H1 (cell line): ENCODE measurements at regions of chr13 and their contacts with region 1.

Region 1: GRCh38 chr13:33017323-33017929 is 1.2 kb downstream of the KL start:
- DNase-seq: no peak
- H3K4me3 ChIP-seq: peak overlapping the region; percentile 32 to 62 (median 37); a peak in 5 of 8 replicates
- H3K27ac ChIP-seq: no peak overlapping the region
- H3K4me1 ChIP-seq: peaks cover 0 to 6% (median under 1%) of the 10 kb centered on the region in 4 experiments; a peak in 4 of 7 replicates
- H3K27me3 ChIP-seq: peaks cover 29 to 43% (median 34%) of the 10 kb centered on the region in 4 experiments
- CTCF ChIP-seq: peak; percentile 37 to 64 (median 49)
- EP300 ChIP-seq: no peak
- POLR2A ChIP-seq: no peak
- RAD21 ChIP-seq: peak; percentile 60 to 73

Region 2: GRCh38 chr13:32955881-32956594 is 61.4 kb before region 1 on chr13:
- CTCF ChIA-PET with region 1: no interaction called
- POLR2A ChIA-PET with region 1: no interaction called
- DNase-seq: no peak
- H3K4me3 ChIP-seq: no peak overlapping the region
- H3K27ac ChIP-seq: no peak overlapping the region
- H3K4me1 ChIP-seq: no peaks in the 10 kb centered on the region
- H3K27me3 ChIP-seq: peaks cover 0 to 9% (median 0%) of the 10 kb centered on the region in 4 experiments; a peak in 2 of 7 replicates
- CTCF ChIP-seq: no peak
- EP300 ChIP-seq: no peak
- POLR2A ChIP-seq: no peak
- RAD21 ChIP-seq: no peak

Region 3: GRCh38 chr13:32993145-32993544 is 24.3 kb before region 1 on chr13:
- CTCF ChIA-PET with region 1: no interaction called
- POLR2A ChIA-PET with region 1: no interaction called
- DNase-seq: no peak
- H3K4me3 ChIP-seq: no peak overlapping the region
- H3K27ac ChIP-seq: no peak overlapping the region
- H3K4me1 ChIP-seq: no peaks in the 10 kb centered on the region
- H3K27me3 ChIP-seq: no peaks in the 10 kb centered on the region
- CTCF ChIP-seq: no peak
- EP300 ChIP-seq: no peak
- POLR2A ChIP-seq: no peak
- RAD21 ChIP-seq: no peak

Region 4: GRCh38 chr13:33032037-33032625 is 14.7 kb after region 1 on chr13:
- CTCF ChIA-PET with region 1: interaction called, 11 read pairs
- POLR2A ChIA-PET with region 1: no interaction called
- DNase-seq: no peak
- H3K4me3 ChIP-seq: no peak overlapping the region
- H3K27ac ChIP-seq: no peak overlapping the region
- H3K4me1 ChIP-seq: no peaks in the 10 kb centered on the region
- H3K27me3 ChIP-seq: no peaks in the 10 kb centered on the region
- CTCF ChIP-seq: no peak
- EP300 ChIP-seq: no peak
- POLR2A ChIP-seq: no peak
- RAD21 ChIP-seq: no peak

Region 5: DNA sequence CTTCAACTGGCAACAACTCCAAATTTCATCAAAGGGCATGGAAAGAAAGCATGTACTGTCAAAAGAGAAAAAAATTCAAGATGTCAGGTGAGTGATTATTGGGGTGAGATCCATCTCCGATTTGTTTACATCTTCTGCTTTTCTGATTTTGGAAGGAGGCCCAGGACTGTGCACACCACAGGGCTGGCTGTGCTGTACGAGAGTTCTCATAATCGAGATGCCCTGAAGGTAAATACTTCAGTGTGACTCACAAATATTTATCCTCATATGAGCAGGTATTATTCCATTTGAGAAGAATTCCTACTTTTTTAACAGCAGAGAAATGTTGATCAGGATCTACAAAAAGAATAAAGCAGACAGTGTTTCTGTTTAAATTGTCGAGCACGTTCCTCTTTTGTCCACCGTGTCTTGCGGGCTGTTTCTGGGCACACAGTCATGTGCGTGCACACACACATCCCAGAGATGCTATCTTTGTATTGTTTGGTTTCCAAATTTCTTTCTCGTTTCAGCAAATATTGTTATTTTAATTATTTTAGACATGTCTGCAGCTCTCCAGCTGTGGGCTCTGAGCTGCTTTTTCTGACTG is 102.5 kb after region 1 on chr13:
- CTCF ChIA-PET with region 1: no interaction called
- POLR2A ChIA-PET with region 1: no interaction called
- DNase-seq: no peak
- H3K4me3 ChIP-seq: no peak overlapping the region
- H3K27ac ChIP-seq: no peak overlapping the region
- H3K4me1 ChIP-seq: peaks cover 2 to 11% (median 6%) of the 10 kb centered on the region in 4 experiments; a peak in 4 of 7 replicates
- H3K27me3 ChIP-seq: no peaks in the 10 kb centered on the region
- CTCF ChIP-seq: no peak
- EP300 ChIP-seq: no peak
- POLR2A ChIP-seq: no peak
- RAD21 ChIP-seq: no peak